H1 (cell line): ENCODE measurements at regions of chr12 and their contacts with region 1.

Region 1: GRCh38 chr12:120394483-120395367 is 25.8 kb upstream of the MSI1 start:
- DNase-seq: peak; percentile 69 to 80
- H3K4me3 ChIP-seq: peak overlapping the region in 2 of 4 experiments; percentile 1 to 36; a peak in 2 of 8 replicates
- H3K27ac ChIP-seq: peak overlapping the region; percentile 5; the same call in 1 of the 2 replicates
- H3K4me1 ChIP-seq: peaks cover 4 to 22% (median 10%) of the 10 kb centered on the region in 4 experiments
- H3K27me3 ChIP-seq: no peaks in the 10 kb centered on the region
- CTCF ChIP-seq: 0 out of 4 replicates have a peak, but pooled peaks of 1 of the 3 experiments have one; percentile 3
- EP300 ChIP-seq: peak in 1 of 2 experiments; percentile 40; a peak in 1 of 3 replicates
- POLR2A ChIP-seq: peak in 1 of 2 experiments; percentile 54; a peak in 1 of 3 replicates
- RAD21 ChIP-seq: no peak; a peak in 1 of 4 replicates

Region 2: DNA sequence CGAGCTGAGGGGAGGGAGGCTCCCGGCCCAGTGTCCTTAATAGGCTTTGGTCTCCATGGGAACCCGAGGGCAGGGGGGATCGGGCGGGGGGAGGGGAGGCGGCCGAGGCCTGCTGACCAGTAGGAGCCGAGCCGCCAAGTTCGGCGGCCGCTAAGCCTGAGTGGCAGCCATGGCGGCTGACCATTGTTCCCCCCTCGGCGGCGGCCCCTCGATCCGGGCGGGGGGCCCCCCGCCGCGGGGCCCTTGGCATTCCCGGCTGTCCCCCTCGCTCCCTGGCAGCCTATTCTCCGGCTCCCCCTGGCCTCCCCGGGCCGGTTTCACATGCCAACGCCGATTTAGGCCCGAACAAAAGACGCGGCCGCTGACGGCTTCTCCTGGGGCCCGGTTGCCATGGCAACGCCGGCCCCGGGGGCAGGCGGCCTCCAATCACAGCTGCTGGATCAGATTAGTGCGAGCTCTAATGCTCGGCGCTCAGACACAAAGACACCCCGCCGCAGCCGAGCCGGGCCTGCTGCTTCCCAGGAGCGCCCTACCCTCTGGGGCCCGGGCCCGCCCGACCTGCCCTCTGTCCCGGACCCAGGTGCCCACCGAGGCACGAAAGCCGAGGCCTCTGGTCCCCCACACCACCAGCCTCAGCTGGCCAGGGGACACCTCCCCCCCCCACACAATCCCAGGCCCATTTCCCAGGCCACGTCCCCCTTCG is 33.1 kb before region 1 on chr12:
- CTCF ChIA-PET with region 1: interaction called, 26 read pairs
- POLR2A ChIA-PET with region 1: interaction called, 16 read pairs
- DNase-seq: peak; percentile 91 to 93
- H3K4me3 ChIP-seq: peak overlapping the region in 3 of 4 experiments; percentile 33 to 53 (median 43); a peak in 5 of 8 replicates
- H3K27ac ChIP-seq: peak overlapping the region; percentile 79
- H3K4me1 ChIP-seq: peaks cover 18 to 36% (median 28%) of the 10 kb centered on the region in 4 experiments
- H3K27me3 ChIP-seq: no peaks in the 10 kb centered on the region
- CTCF ChIP-seq: no peak
- EP300 ChIP-seq: peak in 1 of 2 experiments; percentile 57; a peak in 1 of 3 replicates
- POLR2A ChIP-seq: peak in 1 of 2 experiments; percentile 44; a peak in 1 of 3 replicates
- RAD21 ChIP-seq: peak in 1 of 2 experiments; percentile 1; a peak in 2 of 4 replicates

Region 3: DNA sequence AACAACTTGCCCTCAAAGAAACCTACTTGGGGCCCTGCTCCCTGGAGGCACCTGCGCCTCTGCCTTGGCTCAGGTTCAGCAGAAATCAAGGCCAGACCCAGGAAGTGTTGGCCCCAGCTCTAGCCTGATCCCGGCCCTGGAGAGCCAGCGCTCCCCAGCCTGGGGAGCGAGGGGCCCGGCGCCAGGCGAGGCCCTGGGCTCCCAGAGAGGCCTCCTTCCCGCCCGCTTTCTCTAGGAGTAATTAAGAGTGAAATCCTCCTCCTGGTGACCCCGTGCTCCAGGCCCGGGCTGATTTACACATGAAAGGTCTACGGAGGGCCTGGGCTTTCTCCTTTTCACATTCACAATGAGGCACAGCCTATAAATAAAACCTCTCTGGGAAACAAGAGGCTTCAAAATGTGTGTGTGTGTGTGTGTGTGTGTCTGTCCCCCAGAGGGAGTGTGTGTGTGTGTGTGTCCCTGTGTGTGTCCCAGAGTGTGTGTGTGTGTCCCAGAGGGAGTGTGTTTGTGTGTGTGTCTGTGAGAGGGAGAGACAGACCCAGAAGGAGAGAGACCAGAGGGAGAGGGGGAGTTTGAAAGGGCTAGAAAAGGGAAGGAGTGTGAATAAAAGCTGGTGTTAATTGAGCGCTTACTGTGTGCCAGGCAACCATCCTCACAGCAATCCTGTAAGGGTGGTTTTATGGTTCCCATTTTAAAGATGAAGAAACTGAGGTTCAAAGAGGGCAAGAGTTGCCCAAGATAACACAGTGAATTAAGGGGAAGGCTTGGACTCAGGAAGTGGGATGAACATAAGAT is 19.4 kb after region 1 on chr12:
- CTCF ChIA-PET with region 1: interaction called, 3 read pairs
- POLR2A ChIA-PET with region 1: interaction called, 16 read pairs
- DNase-seq: peak; percentile 80 to 89
- H3K4me3 ChIP-seq: peak overlapping the region in 3 of 4 experiments; percentile 6 to 36 (median 23); a peak in 4 of 8 replicates
- H3K27ac ChIP-seq: peak overlapping the region; percentile 70; the same call in 1 of the 2 replicates
- H3K4me1 ChIP-seq: peaks cover 0 to 10% (median 6%) of the 10 kb centered on the region in 4 experiments; a peak in 3 of 7 replicates
- H3K27me3 ChIP-seq: no peaks in the 10 kb centered on the region
- CTCF ChIP-seq: no peak
- EP300 ChIP-seq: no peak; a peak in 1 of 3 replicates
- POLR2A ChIP-seq: peak; percentile 51 to 80
- RAD21 ChIP-seq: peak; percentile 1 to 14; a peak in 2 of 4 replicates

Region 4: GRCh38 chr12:120437754-120438494 is 43.2 kb after region 1 on chr12 and contains the start of gene COX6A1:
- CTCF ChIA-PET with region 1: interaction called, 31 read pairs
- POLR2A ChIA-PET with region 1: interaction called, 6 read pairs
- DNase-seq: peak; percentile 94 to 98
- H3K4me3 ChIP-seq: peak within 1 kb of the TSS; percentile 81 to 92 (median 90)
- H3K27ac ChIP-seq: peak within 1 kb of the TSS; percentile 58; the same call in 1 of the 2 replicates
- H3K4me1 ChIP-seq: peaks cover 0 to 2% (median under 1%) of the 10 kb centered on the region in 4 experiments; a peak in 1 of 7 replicates
- H3K27me3 ChIP-seq: no peaks in the 10 kb centered on the region
- CTCF ChIP-seq: peak; percentile 25 to 31 (median 28); a peak in 3 of 4 replicates
- EP300 ChIP-seq: no peak
- POLR2A ChIP-seq: peak; percentile 35 to 82
- RAD21 ChIP-seq: peak in 1 of 2 experiments; percentile 9; a peak in 2 of 4 replicates
- total RNA-seq, gene COX6A1: 437 and 465 TPM in 2 replicates

Region 5: GRCh38 chr12:120625557-120626419 is 231.1 kb after region 1 on chr12:
- CTCF ChIA-PET with region 1: no interaction called
- POLR2A ChIA-PET with region 1: no interaction called
- DNase-seq: peak; percentile 51 to 76
- H3K4me3 ChIP-seq: no peak overlapping the region
- H3K27ac ChIP-seq: no peak overlapping the region
- H3K4me1 ChIP-seq: no peaks in the 10 kb centered on the region
- H3K27me3 ChIP-seq: no peaks in the 10 kb centered on the region
- CTCF ChIP-seq: peak; percentile 53 to 63 (median 58)
- EP300 ChIP-seq: no peak
- POLR2A ChIP-seq: no peak
- RAD21 ChIP-seq: peak; percentile 62 to 67